Stomach (tissue), 19 donors: ENCODE measurements at regions of chr4 and their contacts with region 1.

Region 1: DNA sequence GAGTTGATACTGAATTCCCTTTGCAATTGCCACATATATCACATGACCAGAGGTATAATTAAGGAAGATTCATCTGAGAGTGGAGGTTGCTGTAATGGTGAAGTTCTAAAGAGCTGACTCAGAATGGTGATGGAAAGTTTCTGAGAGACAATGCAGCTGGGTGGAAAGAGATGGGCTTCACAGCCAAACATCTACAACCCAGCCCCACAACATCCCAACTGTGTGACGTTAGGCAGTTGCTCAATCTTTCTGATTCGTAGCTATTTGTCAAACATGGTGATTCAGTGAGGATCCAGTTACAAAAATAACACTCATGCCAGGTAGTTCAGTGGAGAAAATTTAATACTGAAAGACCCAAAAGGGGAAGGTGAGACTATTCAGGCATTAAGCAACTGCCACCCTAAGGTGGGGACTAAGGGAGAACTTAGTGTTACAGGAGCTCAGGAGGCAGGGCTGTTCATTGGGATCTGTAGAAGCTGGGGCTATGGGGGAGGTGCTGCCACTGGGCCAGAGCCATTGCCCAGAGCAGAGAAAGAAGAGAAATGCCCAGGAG is 6.9 kb upstream of the AFF1 start:
- DNase-seq: no peak
- H3K4me3 ChIP-seq: no peak overlapping the region
- H3K27ac ChIP-seq: peak overlapping the region in 4 of 5 donors; percentile 36 to 54 (median 50)
- H3K4me1 ChIP-seq: peaks cover 0 to 30% (median 3%) of the 10 kb centered on the region in 4 donors
- H3K27me3 ChIP-seq: no peaks in the 10 kb centered on the region
- CTCF ChIP-seq: no peak
- EP300 ChIP-seq: no peak
- POLR2A ChIP-seq: no peak

Region 2: DNA sequence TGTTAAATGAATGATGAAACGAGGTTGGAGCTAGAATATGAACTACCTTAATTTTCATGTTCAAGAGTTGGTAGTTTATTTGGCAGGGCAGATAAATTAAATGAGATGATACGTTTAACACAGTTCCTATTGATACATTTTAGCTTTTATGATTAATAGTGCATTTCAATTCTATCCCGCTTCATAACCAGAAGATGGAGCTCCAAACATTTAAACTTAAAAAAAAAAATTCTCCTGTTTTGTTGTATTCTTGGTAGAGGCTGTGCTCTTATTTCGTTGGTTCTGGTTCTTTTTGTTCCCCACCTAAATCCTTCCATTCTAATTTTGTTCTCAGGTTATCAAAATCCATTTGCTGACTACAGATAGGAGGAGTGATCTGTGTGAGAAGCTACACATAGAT is 405.6 kb before region 1 on chr4:
- intact Hi-C with region 1: no loop called
- DNase-seq: no peak
- H3K4me3 ChIP-seq: no peak overlapping the region
- H3K27ac ChIP-seq: no peak overlapping the region
- H3K4me1 ChIP-seq: no peaks in the 10 kb centered on the region
- H3K27me3 ChIP-seq: no peaks in the 10 kb centered on the region
- CTCF ChIP-seq: peak in 2 of 7 experiments; percentile 3 to 21
- EP300 ChIP-seq: no peak
- POLR2A ChIP-seq: no peak

Region 3: DNA sequence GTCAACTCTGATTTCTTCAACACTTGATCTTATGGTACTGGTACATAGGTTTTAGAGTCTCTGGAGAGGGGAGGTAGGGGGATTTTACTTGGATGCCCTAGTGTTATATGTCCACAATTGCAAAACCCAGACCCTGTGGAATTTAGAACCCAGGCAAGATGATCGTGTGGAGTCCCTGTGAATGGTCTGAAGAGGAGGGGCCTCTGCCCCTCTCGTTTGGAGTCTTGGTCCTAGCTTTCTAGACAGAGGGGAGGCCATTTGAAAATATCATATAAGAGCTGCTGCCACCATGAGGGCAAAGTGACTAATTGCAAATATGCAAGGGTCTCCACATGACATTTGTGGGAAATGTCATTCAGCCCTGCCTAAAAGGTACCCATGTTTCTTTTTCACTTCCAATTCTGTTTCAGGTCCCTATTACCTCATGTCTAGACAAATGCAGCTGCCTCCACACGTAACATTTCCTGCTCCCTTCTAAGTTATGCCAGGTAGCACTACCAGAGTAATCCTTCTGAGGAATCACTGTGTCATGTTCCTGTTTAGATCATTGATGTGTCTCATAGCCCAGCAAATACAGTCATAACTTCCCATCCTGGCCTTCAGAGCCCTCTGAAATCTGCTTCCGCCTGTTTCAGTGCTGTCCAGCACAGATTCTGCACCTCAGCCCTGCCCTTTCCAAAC is 165.7 kb after region 1 on chr4:
- intact Hi-C with region 1: loop called (anchors 10 kb)
- DNase-seq: peak in 1 of 2 donors; percentile 75
- H3K4me3 ChIP-seq: no peak overlapping the region
- H3K27ac ChIP-seq: peak overlapping the region in 2 of 5 donors; percentile 28 to 70
- H3K4me1 ChIP-seq: peaks cover 8 to 38% (median 22%) of the 10 kb centered on the region in 4 donors
- H3K27me3 ChIP-seq: no peaks in the 10 kb centered on the region
- CTCF ChIP-seq: peak in 5 of 7 experiments; percentile 34 to 71 (median 57)
- EP300 ChIP-seq: no peak
- POLR2A ChIP-seq: no peak

Region 4: DNA sequence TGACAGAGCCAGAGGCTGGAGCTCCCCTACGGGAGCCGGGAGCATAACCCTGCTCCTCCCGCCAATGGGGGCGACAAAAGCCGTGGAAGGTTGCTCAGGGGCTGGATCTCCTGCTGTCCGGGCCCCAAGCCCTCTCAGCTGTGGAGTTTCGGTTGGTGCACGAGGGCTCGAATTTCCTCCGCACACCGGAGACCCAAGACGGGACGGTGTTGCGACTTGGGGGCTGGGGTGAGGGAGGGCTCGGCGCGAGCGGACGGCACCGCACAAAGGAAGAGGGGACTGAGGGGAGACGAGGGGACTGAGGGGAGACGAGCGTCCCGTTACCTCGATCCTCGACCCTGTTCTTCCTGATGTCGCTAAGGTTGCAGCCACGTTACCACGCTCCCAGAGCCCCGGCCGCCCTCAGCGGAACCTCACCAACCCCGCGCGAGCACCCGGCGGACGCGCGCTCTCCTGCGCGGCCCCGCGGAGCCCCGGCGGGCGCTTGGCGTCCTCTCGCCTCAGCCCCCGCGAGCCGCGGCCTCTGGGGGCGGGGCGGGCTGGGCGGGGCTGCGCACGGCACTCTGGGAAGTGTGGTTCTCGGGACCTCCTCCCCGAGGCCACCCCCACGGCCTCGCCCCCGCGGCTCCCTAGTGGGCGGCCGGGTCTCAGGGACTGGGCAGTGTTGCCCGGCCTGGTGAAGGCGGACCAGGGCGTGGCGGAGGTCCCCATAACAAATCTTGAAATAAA is 292.3 kb after region 1 on chr4 and contains the start of gene KLHL8:
- intact Hi-C with region 1: loop called (anchors 10 kb)
- DNase-seq: peak; percentile 86 to 97
- H3K4me3 ChIP-seq: peak within 1 kb of the TSS; percentile 89 to 99 (median 95)
- H3K27ac ChIP-seq: peak within 1 kb of the TSS; percentile 90 to 97 (median 92)
- H3K4me1 ChIP-seq: peaks cover 0 to 21% (median 9%) of the 10 kb centered on the region in 4 donors
- H3K27me3 ChIP-seq: no peaks in the 10 kb centered on the region
- CTCF ChIP-seq: no peak
- EP300 ChIP-seq: no peak
- POLR2A ChIP-seq: no peak
- total RNA-seq, gene KLHL8: 8.7 to 107 (median 16.9) TPM